ENCODE measurements at regions of chrX and their contacts with region 1.

Region 1: GRCh38 chrX:106692425-106693065 is 34.0 kb upstream of the RNF128 start:
- DNase-seq: no peak
- H3K4me3 ChIP-seq: no peak overlapping the region
- H3K27ac ChIP-seq: no peak overlapping the region
- H3K4me1 ChIP-seq: no peaks in the 10 kb centered on the region
- H3K27me3 ChIP-seq: peaks cover 0 to 21% of the 10 kb centered on the region in 2 donors
- CTCF ChIP-seq: no peak
- POLR2A ChIP-seq: no peak

Region 2: GRCh38 chrX:106168107-106168506 is 524.4 kb before region 1 on chrX and contains the start of gene PWWP3B:
- intact Hi-C with region 1: no loop called
- DNase-seq: peak in 1 of 2 donors; percentile 50
- H3K4me3 ChIP-seq: peak within 1 kb of the TSS in 2 of 3 donors; percentile 24 to 34
- H3K27ac ChIP-seq: no peak within 1 kb of the TSS
- H3K4me1 ChIP-seq: no peaks in the 10 kb centered on the region
- H3K27me3 ChIP-seq: peaks cover 0 to 20% of the 10 kb centered on the region in 2 donors
- CTCF ChIP-seq: no peak
- POLR2A ChIP-seq: no peak
- total RNA-seq, gene PWWP3B: 2.6 to 13.9 (median 7.0) TPM

Region 3: DNA sequence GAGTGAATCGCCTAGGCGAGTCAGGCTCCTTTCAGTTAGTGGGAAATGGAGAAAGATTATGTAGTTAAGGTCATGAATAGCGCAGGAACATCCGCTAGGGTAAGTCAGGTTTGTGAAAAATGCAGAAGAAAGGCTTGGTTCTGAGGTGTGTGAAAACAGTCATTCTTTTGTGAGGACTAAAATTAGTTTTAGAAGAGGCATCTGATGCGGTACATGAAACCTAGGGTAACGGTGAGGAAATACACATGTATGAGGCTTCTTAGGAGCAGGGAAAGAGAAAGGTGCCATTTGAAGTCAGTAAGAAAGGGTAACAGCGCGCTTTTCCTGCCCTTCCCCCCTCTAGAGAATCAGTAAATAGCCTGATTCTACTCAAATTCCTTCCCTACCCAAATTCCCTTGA is 33.4 kb after region 1 on chrX:
- intact Hi-C with region 1: loop called (anchors 2 kb)
- DNase-seq: no peak
- H3K4me3 ChIP-seq: peak overlapping the region; percentile 37 to 65 (median 58)
- H3K27ac ChIP-seq: peak overlapping the region in 1 of 2 donors; percentile 66
- H3K4me1 ChIP-seq: no peaks in the 10 kb centered on the region
- H3K27me3 ChIP-seq: peaks cover 0 to 70% of the 10 kb centered on the region in 2 donors
- CTCF ChIP-seq: no peak
- POLR2A ChIP-seq: no peak

Region 4: GRCh38 chrX:107627838-107628661 is 935.5 kb after region 1 on chrX and contains the start of gene PRPS1:
- intact Hi-C with region 1: no loop called
- DNase-seq: peak; percentile 80 to 88
- H3K4me3 ChIP-seq: peak within 1 kb of the TSS; percentile 60 to 79 (median 62)
- H3K27ac ChIP-seq: peak within 1 kb of the TSS; percentile 66 to 89
- H3K4me1 ChIP-seq: no peaks in the 10 kb centered on the region
- H3K27me3 ChIP-seq: peaks cover 0 to 19% of the 10 kb centered on the region in 2 donors
- CTCF ChIP-seq: no peak
- POLR2A ChIP-seq: peak; percentile 19
- total RNA-seq, gene PRPS1: 19.3 to 24.9 (median 20.8) TPM